Caco-2 (cell line): ENCODE measurements at regions of chr2 and their contacts with region 1.

Region 1: GRCh38 chr2:36770542-36771287 is 74.2 kb downstream of the VIT start:
- DNase-seq: peak; percentile 68 to 76
- H3K4me3 ChIP-seq: no peak overlapping the region
- H3K4me3 Mint-ChIP-seq: no peak overlapping the region
- H3K27ac Mint-ChIP-seq: no peak overlapping the region
- H3K4me1 ChIP-seq: no peaks in the 10 kb centered on the region
- H3K4me1 Mint-ChIP-seq: no peaks in the 10 kb centered on the region
- H3K27me3 ChIP-seq: no peaks in the 10 kb centered on the region
- H3K27me3 Mint-ChIP-seq: peaks cover 3% of the 10 kb centered on the region
- CTCF ChIP-seq: peak; percentile 75 to 93

Region 2: GRCh38 chr2:36376319-36376765 is 394.4 kb before region 1 on chr2:
- CTCF ChIA-PET with region 1: no interaction called
- POLR2A ChIA-PET with region 1: no interaction called
- intact Hi-C with region 1: no loop called
- DNase-seq: no peak
- H3K4me3 ChIP-seq: no peak overlapping the region
- H3K4me3 Mint-ChIP-seq: no peak overlapping the region
- H3K27ac Mint-ChIP-seq: peak overlapping the region; percentile 3
- H3K4me1 ChIP-seq: peaks cover 90% of the 10 kb centered on the region
- H3K4me1 Mint-ChIP-seq: peaks cover 80% of the 10 kb centered on the region
- H3K27me3 ChIP-seq: no peaks in the 10 kb centered on the region
- H3K27me3 Mint-ChIP-seq: no peaks in the 10 kb centered on the region
- CTCF ChIP-seq: no peak

Region 3: GRCh38 chr2:36695746-36696415 is 74.8 kb before region 1 on chr2:
- CTCF ChIA-PET with region 1: interaction called, 13 read pairs
- POLR2A ChIA-PET with region 1: no interaction called
- intact Hi-C with region 1: loop called (anchors 1 kb)
- DNase-seq: peak in 1 of 2 experiments; percentile 44
- H3K4me3 ChIP-seq: no peak overlapping the region
- H3K4me3 Mint-ChIP-seq: no peak overlapping the region
- H3K27ac Mint-ChIP-seq: no peak overlapping the region
- H3K4me1 ChIP-seq: peaks cover 20% of the 10 kb centered on the region
- H3K4me1 Mint-ChIP-seq: peaks cover 18% of the 10 kb centered on the region
- H3K27me3 ChIP-seq: no peaks in the 10 kb centered on the region
- H3K27me3 Mint-ChIP-seq: no peaks in the 10 kb centered on the region
- CTCF ChIP-seq: peak; percentile 31 to 49

Region 4: DNA sequence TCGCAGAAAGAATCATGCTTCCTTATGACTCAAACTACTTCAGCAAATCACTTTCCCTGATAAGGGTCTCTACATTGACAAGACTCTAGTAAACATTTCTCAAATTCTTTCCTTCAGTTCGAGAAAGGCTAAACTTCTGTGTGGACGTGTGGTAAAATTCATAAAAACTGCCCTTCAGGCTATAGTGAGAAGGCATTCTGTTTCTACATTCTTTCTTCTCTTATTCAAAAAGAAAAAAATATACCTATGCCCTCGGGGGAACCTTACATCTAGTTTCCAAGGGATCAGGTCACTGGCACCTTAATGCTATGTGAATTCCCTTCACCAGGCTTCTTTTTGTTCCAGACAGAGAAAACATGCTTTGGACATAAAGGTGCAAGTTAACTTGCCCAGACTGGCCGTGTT is 69.3 kb before region 1 on chr2:
- CTCF ChIA-PET with region 1: interaction called, 13 read pairs
- POLR2A ChIA-PET with region 1: no interaction called
- intact Hi-C with region 1: loop called (anchors 1 kb)
- DNase-seq: peak; percentile 77 to 86
- H3K4me3 ChIP-seq: no peak overlapping the region
- H3K4me3 Mint-ChIP-seq: peak overlapping the region; percentile 42
- H3K27ac Mint-ChIP-seq: peak overlapping the region; percentile 42
- H3K4me1 ChIP-seq: peaks cover 42% of the 10 kb centered on the region
- H3K4me1 Mint-ChIP-seq: peaks cover 21% of the 10 kb centered on the region
- H3K27me3 ChIP-seq: no peaks in the 10 kb centered on the region
- H3K27me3 Mint-ChIP-seq: no peaks in the 10 kb centered on the region
- CTCF ChIP-seq: peak; percentile 35 to 50